Esophagus squamous epithelium (tissue), 5 donors: ENCODE measurements at regions of chr1 and their contacts with region 1.

Region 1: DNA sequence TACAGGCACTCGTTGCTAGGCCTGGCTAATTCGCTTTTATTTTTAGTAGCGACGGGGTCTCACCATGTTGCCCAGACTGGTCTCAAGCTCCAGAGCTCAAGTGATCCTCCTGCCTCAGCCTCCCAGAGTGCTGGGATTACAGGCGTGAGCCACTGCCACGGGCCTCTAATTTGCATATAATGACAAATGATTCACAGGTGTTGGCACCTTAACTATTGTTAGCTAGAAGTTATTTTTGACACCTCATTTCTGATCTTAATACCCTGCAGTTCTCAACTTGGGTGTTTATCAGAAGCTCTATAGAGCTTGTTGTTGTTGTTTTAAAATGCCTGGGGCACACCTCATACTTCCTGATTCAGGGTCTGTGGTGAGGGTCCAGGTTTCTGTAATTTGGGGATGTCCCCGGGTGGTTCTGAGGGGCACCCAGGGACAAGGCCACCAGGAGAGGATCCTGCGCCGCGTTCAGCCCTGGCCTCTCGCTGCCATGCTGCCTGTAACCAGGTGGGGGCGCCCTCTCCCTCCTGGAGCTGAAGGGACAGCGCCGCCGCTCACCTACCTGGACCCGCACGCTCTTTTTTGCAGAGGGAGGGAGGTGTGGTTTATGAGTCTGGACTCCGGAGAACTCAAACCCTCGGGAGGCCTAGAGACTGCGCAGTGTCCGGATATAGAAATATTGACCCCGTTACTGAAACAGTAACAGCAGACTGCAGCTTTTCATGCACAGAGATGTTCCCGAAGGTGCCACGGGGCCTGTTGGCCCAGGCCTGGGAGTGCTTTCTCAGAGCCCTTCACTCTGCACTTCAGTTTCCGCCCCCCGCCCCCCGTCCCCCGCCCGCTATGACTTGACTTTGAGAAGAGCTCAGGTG is 23.0 kb upstream of the NEK2 start:
- DNase-seq: peak; percentile 21
- H3K4me3 ChIP-seq: peak overlapping the region in 2 of 4 donors; percentile 22 to 57
- H3K27ac ChIP-seq: no peak overlapping the region
- H3K4me1 ChIP-seq: peaks cover 7 to 23% (median 9%) of the 10 kb centered on the region in 3 donors
- H3K27me3 ChIP-seq: peaks cover 0 to 14% (median 0%) of the 10 kb centered on the region in 4 donors
- CTCF ChIP-seq: peak; percentile 87 to 97 (median 93)
- POLR2A ChIP-seq: no peak

Region 2: DNA sequence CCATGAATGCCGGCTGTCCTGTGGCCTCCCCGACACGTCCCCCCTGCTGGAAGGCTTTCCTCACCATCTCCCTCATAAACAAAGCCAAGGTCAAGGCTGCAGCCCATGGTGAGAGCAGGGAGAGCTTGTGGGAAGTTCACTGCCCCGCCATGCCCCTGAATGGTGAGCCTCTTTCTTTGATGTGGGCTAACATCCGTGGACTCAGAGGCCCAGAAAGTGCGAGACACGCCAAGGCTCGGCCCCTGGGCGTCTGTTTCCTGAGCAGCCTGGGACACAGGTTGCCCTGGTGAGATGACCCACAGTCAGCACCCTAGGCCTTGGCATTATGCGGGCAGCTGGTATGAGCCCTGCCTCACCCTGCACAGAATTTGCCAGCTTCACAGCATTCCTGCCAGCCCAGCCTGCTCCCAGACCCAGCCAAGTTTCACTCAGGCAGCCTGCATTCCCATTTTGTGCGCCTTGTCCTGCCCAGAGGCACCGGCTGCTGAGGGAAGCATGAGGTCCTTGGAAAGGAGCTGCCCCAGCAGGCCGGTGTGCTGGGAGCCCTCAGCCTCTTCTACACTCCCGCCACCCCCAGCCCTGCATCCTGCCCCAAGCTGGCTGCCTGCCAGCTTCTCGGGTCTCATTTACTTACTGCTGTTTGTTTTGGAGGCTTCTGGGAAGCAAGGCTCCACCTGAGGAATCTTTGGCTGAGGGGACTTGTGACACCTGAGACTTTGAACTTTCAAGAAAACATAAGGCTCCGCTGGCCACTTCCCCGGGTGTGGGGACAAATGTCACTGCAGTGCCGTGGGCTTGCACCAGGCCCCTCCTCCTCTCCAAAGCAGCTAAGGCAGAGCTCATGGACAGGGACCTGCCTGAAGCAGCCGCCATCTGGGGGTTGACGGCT is 54.8 kb before region 1 on chr1:
- intact Hi-C with region 1: no loop called
- DNase-seq: no peak
- H3K4me3 ChIP-seq: no peak overlapping the region
- H3K27ac ChIP-seq: peak overlapping the region; percentile 15 to 59 (median 39)
- H3K4me1 ChIP-seq: peaks cover 13 to 36% (median 14%) of the 10 kb centered on the region in 3 donors
- H3K27me3 ChIP-seq: no peaks in the 10 kb centered on the region
- CTCF ChIP-seq: no peak
- POLR2A ChIP-seq: no peak

Region 3: GRCh38 chr1:211830330-211831142 is 132.1 kb after region 1 on chr1 and contains the start of gene LPGAT1:
- intact Hi-C with region 1: loop called (anchors 5 kb)
- DNase-seq: peak; percentile 5
- H3K4me3 ChIP-seq: peak within 1 kb of the TSS; percentile 68 to 99 (median 98)
- H3K27ac ChIP-seq: peak within 1 kb of the TSS; percentile 86 to 93 (median 93)
- H3K4me1 ChIP-seq: peaks cover 0 to 45% (median 19%) of the 10 kb centered on the region in 3 donors
- H3K27me3 ChIP-seq: no peaks in the 10 kb centered on the region
- CTCF ChIP-seq: peak in 5 of 6 experiments; percentile 59 to 78 (median 65)
- POLR2A ChIP-seq: peak in 2 of 4 donors; percentile 36 to 51
- total RNA-seq, gene LPGAT1: 10.8 to 32.0 (median 24.8) TPM

Region 4: DNA sequence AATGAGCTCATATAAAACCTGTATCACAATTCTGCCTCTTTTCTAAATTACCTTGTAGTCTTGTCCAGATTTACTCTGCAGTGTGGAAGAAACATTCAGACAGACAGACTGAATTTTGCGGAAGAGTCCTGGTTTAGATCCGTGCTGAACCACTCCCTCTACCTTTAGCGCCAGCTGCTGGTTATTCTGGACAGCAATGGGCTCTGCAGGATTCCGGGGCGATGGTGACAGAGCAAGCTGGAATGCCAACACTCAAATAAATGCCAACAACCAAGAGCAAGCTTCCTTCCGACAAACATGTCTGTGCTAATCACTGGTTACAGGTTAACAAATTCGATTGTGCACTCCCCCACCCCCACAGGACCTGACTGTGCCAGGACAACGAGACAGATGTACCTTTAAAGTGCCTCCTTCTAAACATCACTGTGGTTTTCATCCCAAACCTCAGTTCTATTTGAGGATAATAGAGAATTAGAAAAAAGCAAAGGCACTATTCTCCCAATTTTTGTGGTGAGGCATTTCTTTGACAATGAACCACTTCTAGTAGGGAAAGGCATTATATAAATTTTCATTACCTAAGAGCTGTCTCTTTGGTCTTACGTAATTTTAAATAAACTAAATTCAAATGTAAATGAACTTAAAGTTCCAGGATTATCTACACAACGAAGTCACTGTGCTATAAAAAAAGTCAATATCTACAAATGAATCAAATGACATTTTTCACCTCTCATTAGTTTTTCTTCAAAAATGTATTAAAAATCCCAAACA is 246.5 kb after region 1 on chr1:
- intact Hi-C with region 1: loop called (anchors 10 kb)
- DNase-seq: no peak
- H3K4me3 ChIP-seq: no peak overlapping the region
- H3K27ac ChIP-seq: peak overlapping the region in 1 of 4 donors; percentile 10
- H3K4me1 ChIP-seq: peaks cover 0 to 13% (median 0%) of the 10 kb centered on the region in 3 donors
- H3K27me3 ChIP-seq: no peaks in the 10 kb centered on the region
- CTCF ChIP-seq: peak in 5 of 6 experiments; percentile 44 to 78 (median 72)
- POLR2A ChIP-seq: no peak